ENCODE measurements at regions of chr12 and their contacts with region 1.

Region 1: DNA sequence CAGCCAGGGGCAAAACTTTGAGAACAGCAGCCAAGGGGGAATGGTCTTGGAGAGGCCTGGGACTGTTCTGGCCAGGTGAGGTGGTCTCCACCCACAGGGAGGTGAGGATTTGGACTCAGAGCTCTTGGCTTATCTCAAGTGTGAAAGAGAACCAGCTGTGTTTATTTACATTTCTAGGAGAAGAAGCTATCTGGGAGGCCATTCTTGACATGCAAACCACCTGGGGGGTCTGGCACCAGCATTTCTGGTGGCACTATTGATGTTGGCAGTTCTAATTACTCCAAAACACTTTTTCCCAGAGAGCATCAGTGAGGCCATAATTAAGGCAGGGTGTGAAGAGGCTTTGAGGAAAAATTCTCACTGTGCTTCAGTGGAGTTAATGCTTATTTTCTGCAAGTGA is 95.1 kb downstream of the CAND1 start:
- DNase-seq: no peak
- H3K4me3 ChIP-seq: no peak overlapping the region
- H3K27ac ChIP-seq: no peak overlapping the region
- H3K4me1 ChIP-seq: no peaks in the 10 kb centered on the region
- H3K27me3 ChIP-seq: no peaks in the 10 kb centered on the region
- CTCF ChIP-seq: no peak
- EP300 ChIP-seq: no peak
- POLR2A ChIP-seq: no peak

Region 2: GRCh38 chr12:66829660-66830325 is 534.4 kb before region 1 on chr12:
- intact Hi-C with region 1: no loop called
- DNase-seq: peak in 1 of 2 donors; percentile 29
- H3K4me3 ChIP-seq: no peak overlapping the region
- H3K27ac ChIP-seq: no peak overlapping the region
- H3K4me1 ChIP-seq: no peaks in the 10 kb centered on the region
- H3K27me3 ChIP-seq: no peaks in the 10 kb centered on the region
- CTCF ChIP-seq: no peak
- EP300 ChIP-seq: no peak
- POLR2A ChIP-seq: no peak

Region 3: GRCh38 chr12:67068761-67069450 is 295.3 kb before region 1 on chr12:
- intact Hi-C with region 1: no loop called
- DNase-seq: peak; percentile 34 to 78
- H3K4me3 ChIP-seq: peak overlapping the region; percentile 68 to 79 (median 78)
- H3K27ac ChIP-seq: peak overlapping the region; percentile 52 to 83 (median 73)
- H3K4me1 ChIP-seq: peaks cover 9 to 28% (median 19%) of the 10 kb centered on the region in 4 donors
- H3K27me3 ChIP-seq: peaks cover 0 to 43% (median 10%) of the 10 kb centered on the region in 3 donors
- CTCF ChIP-seq: no peak
- EP300 ChIP-seq: no peak
- POLR2A ChIP-seq: no peak

Region 4: DNA sequence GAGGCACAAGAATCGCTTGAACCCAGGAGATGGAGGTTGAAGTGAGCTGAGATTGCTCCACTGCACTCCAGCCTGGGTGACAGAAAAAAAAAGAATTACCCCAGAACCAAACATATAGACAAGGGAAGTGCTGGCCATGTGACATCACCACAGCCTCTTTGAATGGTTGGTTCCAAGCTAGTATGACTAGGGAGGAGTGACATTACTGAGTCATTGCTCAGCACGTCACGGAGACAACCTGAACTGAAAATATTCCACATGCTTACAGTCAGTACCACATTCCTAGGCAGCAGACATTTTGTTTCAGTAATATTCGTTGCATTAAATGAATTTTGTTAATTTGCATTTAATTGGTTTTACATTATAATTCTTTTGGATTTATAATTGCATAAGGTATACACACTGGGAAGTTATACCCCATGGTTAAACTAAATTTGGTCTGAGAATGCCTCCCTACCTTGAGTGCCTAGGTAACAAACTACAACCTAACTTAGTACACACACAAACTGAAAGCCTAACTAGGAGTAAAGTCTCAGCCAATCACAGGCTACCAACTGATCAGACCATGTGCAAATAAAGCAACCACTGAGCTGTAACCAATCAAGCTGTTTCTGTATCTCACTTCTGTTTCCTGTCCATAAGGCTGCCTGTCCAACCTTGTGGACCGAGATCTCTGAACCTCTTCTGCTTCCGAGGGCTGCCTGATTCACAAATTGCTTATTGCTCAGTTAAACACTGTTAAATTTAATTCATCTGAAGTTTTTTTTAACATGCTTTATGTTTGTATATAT is 69.4 kb after region 1 on chr12:
- intact Hi-C with region 1: loop called (anchors 10 kb)
- DNase-seq: no peak
- H3K4me3 ChIP-seq: no peak overlapping the region
- H3K27ac ChIP-seq: peak overlapping the region in 3 of 5 donors; percentile 29 to 57 (median 52)
- H3K4me1 ChIP-seq: peaks cover 0 to 53% (median 13%) of the 10 kb centered on the region in 4 donors
- H3K27me3 ChIP-seq: no peaks in the 10 kb centered on the region
- CTCF ChIP-seq: no peak
- EP300 ChIP-seq: no peak
- POLR2A ChIP-seq: no peak

Region 5: DNA sequence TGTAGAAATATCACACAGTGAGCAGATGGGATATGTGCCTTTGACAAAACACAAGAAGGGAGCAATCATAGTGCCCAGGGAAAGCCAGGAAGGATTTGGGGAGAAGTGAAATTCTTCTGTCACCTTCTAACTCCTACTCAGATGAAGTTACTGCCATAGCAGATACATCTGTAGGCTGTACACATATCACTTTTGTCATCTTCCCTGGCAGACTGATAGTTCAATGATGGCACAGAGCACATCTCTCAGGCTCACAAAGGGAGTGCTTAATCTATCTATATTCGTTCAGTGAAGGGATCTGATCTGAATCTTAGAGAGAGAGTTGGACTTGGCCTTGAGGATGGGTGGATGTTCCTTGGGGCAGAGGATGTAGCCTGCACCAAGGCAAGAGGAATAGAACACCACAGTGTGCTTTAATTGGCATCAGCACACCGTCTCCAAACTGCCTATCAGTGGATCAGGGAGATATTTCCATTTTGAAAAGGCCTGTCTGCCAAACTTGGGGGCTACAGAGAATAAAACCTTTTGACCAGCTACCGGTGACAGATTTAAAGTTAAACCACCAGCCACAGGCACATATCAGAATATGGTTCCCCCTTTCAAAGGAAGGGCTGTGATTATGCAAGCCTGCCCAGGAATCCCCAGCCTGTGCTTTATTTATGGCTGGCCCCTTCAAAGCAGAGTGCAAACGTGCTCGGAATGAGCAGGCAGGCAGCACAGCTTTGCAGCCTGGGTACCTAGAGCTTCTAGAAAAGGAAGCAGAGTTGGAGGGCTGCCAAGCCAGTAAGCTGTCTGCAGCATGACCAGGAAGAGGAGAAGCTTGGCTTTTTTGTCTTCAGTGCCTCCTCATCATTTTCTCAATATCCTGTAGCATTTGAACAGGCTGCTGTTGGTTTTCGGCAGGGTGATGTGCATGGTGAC is 118.8 kb after region 1 on chr12:
- intact Hi-C with region 1: no loop called
- DNase-seq: peak; percentile 71 to 85
- H3K4me3 ChIP-seq: no peak overlapping the region
- H3K27ac ChIP-seq: no peak overlapping the region
- H3K4me1 ChIP-seq: peaks cover 0 to 15% (median 9%) of the 10 kb centered on the region in 4 donors
- H3K27me3 ChIP-seq: no peaks in the 10 kb centered on the region
- CTCF ChIP-seq: no peak
- EP300 ChIP-seq: no peak
- POLR2A ChIP-seq: no peak

Measured in stomach (tissue), 19 donors.